HCT116 (cell line): ENCODE measurements at regions of chr4 and their contacts with region 1.

Region 1: GRCh38 chr4:25312496-25313200 is at the start of gene ZCCHC4:
- DNase-seq: peak; percentile 86
- ATAC-seq: peak; percentile 97
- H3K4me3 ChIP-seq: peak within 1 kb of the TSS; percentile 80 to 98
- H3K27ac ChIP-seq: peak within 1 kb of the TSS; percentile 74
- H3K4me1 ChIP-seq: peaks cover 8 to 13% of the 10 kb centered on the region in 2 experiments; a peak in 3 of 4 replicates
- H3K27me3 ChIP-seq: no peaks in the 10 kb centered on the region
- CTCF ChIP-seq: peak; percentile 98 to 99 (median 99)
- POLR2A ChIP-seq: peak; percentile 34
- RAD21 ChIP-seq: peak; percentile 62
- total RNA-seq, gene ZCCHC4: 12.3 TPM

Region 2: GRCh38 chr4:25159884-25160713 is 152.5 kb before region 1 on chr4 and contains the start of gene SEPSECS:
- CTCF ChIA-PET with region 1: interaction called, 11 read pairs
- POLR2A ChIA-PET with region 1: no interaction called
- RAD21 ChIA-PET with region 1: no interaction called
- intact Hi-C with region 1: loop called (anchors 5 kb)
- DNase-seq: peak; percentile 96
- ATAC-seq: peak; percentile 91
- H3K4me3 ChIP-seq: peak within 1 kb of the TSS; percentile 76 to 93
- H3K27ac ChIP-seq: peak within 1 kb of the TSS; percentile 94
- H3K4me1 ChIP-seq: peaks cover 13 to 21% of the 10 kb centered on the region in 2 experiments
- H3K27me3 ChIP-seq: no peaks in the 10 kb centered on the region
- CTCF ChIP-seq: no peak
- POLR2A ChIP-seq: peak; percentile 90
- RAD21 ChIP-seq: no peak
- total RNA-seq, gene SEPSECS: 10.6 TPM

Region 3: GRCh38 chr4:25234390-25235370 is 78.0 kb before region 1 on chr4:
- CTCF ChIA-PET with region 1: interaction called, 19 read pairs
- POLR2A ChIA-PET with region 1: interaction called, 6 read pairs
- RAD21 ChIA-PET with region 1: interaction called in 1 of 2 experiments, 4 read pairs
- intact Hi-C with region 1: loop called (anchors 1 kb)
- DNase-seq: peak; percentile 67
- ATAC-seq: peak; percentile 52
- H3K4me3 ChIP-seq: peak overlapping the region; percentile 77 to 79
- H3K27ac ChIP-seq: peak overlapping the region; percentile 89
- H3K4me1 ChIP-seq: peaks cover 10 to 15% of the 10 kb centered on the region in 2 experiments
- H3K27me3 ChIP-seq: no peaks in the 10 kb centered on the region
- CTCF ChIP-seq: peak in 2 of 3 experiments; percentile 18 to 50; a peak in 2 of 6 replicates
- POLR2A ChIP-seq: no peak
- RAD21 ChIP-seq: no peak

Region 4: GRCh38 chr4:25299480-25300188 is 13.0 kb before region 1 on chr4:
- CTCF ChIA-PET with region 1: interaction called, 30 read pairs
- POLR2A ChIA-PET with region 1: no interaction called
- RAD21 ChIA-PET with region 1: no interaction called
- intact Hi-C with region 1: no loop called
- DNase-seq: no peak
- ATAC-seq: peak; percentile 87
- H3K4me3 ChIP-seq: no peak overlapping the region
- H3K27ac ChIP-seq: no peak overlapping the region
- H3K4me1 ChIP-seq: peaks cover 9 to 12% of the 10 kb centered on the region in 2 experiments; a peak in 3 of 4 replicates
- H3K27me3 ChIP-seq: no peaks in the 10 kb centered on the region
- CTCF ChIP-seq: peak in 1 of 3 experiments; percentile 22; a peak in 1 of 6 replicates
- POLR2A ChIP-seq: no peak
- RAD21 ChIP-seq: peak; percentile 38

Region 5: GRCh38 chr4:25367004-25367621 is 54.5 kb after region 1 on chr4:
- CTCF ChIA-PET with region 1: interaction called, 28 read pairs
- POLR2A ChIA-PET with region 1: interaction called, 3 read pairs
- RAD21 ChIA-PET with region 1: interaction called in 1 of 2 experiments, 3 read pairs
- intact Hi-C with region 1: no loop called
- DNase-seq: no peak
- ATAC-seq: no peak
- H3K4me3 ChIP-seq: no peak overlapping the region
- H3K27ac ChIP-seq: no peak overlapping the region
- H3K4me1 ChIP-seq: no peaks in the 10 kb centered on the region
- H3K27me3 ChIP-seq: no peaks in the 10 kb centered on the region
- CTCF ChIP-seq: peak; percentile 55 to 72 (median 69); a peak in 5 of 6 replicates
- POLR2A ChIP-seq: no peak
- RAD21 ChIP-seq: peak; percentile 77